HEK293 (cell line): ENCODE measurements at regions of chr4 and their contacts with region 1.

Region 1: DNA sequence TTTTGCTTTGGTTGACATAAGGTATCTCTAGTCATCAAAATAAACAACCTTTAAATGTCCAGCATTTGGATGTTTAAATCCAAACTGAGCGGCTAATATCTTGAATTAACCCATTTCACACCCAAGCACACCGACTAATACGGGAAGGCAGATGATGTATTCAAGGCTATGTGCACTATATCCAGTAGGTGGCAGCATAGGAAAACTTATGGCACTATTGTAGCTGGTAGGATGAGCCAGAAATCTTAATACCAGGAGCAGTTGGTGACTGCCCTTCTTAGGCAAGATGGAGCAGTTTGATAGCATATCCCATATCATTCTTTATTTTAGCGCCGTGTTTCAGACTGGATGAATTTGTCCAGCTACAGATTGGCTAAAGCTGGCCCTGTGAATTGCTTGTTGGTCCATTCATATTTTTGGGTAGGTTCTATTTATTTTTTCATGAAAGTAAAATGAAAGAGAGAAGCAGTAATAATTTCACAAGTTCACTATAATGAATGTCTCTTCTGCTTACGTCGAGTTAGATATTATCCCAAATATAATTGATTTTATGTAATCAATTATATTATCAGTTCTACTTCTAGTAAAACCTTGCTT is 24.4 kb downstream of the UCHL1 start:
- H3K4me3 ChIP-seq: no peak overlapping the region
- H3K27ac ChIP-seq: no peak overlapping the region
- H3K4me1 ChIP-seq: no peaks in the 10 kb centered on the region
- CTCF ChIP-seq: peak; percentile 73

Region 2: GRCh38 chr4:41661442-41662076 is 380.4 kb after region 1 on chr4:
- CTCF ChIA-PET with region 1: interaction called, 73 read pairs
- POLR2A ChIA-PET with region 1: no interaction called
- H3K4me3 ChIP-seq: no peak overlapping the region
- H3K27ac ChIP-seq: no peak overlapping the region
- H3K4me1 ChIP-seq: no peaks in the 10 kb centered on the region
- CTCF ChIP-seq: peak; percentile 40; the same call in 1 of the 2 replicates

Region 3: DNA sequence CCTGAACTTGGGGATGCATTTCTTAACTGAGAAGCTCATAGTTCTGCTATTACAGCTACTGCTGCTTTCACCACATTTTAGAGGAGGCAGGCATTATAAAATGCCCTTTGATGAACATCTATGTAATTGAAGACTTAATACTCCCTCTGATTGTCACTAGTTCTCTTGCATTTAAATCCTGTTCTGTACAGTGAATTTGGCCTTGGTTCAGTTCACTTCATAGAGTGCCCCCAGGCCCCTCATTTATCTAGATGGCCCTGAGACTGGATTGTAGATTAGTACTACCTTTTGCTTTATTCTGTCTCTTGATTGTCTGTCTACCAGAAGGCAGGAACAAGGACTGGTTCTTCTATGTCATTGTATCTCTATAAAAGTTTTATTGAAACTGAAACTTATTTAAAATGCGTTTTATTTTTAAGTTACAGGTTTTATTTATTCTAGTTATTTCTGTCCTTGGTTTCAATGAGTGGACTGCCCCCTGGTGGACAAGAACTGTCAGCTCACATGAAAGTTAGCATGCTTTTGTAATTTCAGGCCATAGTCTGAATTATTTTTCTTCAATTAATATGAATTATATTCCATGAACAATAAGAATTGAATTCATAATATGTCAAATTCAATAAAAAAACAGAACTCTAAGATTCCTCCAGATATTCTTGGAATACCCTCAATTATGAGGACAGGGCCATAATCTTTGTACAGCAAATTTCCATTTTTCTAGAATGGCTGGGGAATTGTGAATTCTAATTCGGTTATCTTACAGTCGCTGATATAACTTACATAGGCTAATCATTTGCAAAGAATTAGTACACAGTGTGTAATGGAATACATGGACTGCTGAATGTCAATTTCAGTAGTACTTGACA is 606.9 kb after region 1 on chr4:
- CTCF ChIA-PET with region 1: interaction called, 10 read pairs
- POLR2A ChIA-PET with region 1: no interaction called
- H3K4me3 ChIP-seq: no peak overlapping the region
- H3K27ac ChIP-seq: no peak overlapping the region
- H3K4me1 ChIP-seq: no peaks in the 10 kb centered on the region
- CTCF ChIP-seq: no peak